Activated T-helper 2 cell treated with anti-CD3 and anti-CD28 coated beads, Interferon-gamma antibody, Interleukin-2, Interleukin-4, amounts not matched to agents 10 μg/mL and 5 μg/mL and 100 μg/mL, durations not matched to agents 14 hours and 24 hours and 36 hours (primary cell): ENCODE measurements at regions of chr20 and their contacts with region 1.

Region 1: DNA sequence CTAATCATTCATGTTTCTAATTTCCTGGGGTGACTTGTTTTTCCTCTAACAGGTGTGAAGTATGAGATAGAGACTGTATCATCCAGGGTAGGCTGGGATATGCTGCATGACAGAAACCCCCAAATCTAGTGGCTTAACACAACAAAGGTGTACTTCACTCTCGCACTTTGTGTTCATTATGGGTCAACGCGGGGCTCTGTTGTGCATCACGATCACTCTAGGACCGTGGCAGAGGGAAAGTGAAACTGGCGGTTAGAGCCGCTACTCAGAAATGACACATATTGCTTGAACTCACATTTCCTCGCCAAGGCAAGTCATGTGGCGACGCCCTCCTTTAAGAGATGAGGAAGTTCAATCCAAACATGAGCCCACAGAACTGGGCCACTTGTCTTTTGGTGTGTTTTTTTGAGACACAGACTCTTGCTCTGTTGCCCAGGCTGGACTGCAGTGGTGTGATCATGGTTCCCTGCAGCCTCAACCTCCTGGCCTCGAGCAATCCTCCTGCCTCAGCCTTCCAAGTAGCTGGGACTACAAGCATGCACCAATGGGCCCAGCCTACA is 41.3 kb downstream of the PCNA start:
- DNase-seq: peak; percentile 84
- H3K4me3 Mint-ChIP-seq: peak overlapping the region; percentile 69
- H3K27ac Mint-ChIP-seq: peak overlapping the region; percentile 96
- H3K4me1 Mint-ChIP-seq: peaks cover 48% of the 10 kb centered on the region
- H3K27me3 Mint-ChIP-seq: no peaks in the 10 kb centered on the region

Region 2: DNA sequence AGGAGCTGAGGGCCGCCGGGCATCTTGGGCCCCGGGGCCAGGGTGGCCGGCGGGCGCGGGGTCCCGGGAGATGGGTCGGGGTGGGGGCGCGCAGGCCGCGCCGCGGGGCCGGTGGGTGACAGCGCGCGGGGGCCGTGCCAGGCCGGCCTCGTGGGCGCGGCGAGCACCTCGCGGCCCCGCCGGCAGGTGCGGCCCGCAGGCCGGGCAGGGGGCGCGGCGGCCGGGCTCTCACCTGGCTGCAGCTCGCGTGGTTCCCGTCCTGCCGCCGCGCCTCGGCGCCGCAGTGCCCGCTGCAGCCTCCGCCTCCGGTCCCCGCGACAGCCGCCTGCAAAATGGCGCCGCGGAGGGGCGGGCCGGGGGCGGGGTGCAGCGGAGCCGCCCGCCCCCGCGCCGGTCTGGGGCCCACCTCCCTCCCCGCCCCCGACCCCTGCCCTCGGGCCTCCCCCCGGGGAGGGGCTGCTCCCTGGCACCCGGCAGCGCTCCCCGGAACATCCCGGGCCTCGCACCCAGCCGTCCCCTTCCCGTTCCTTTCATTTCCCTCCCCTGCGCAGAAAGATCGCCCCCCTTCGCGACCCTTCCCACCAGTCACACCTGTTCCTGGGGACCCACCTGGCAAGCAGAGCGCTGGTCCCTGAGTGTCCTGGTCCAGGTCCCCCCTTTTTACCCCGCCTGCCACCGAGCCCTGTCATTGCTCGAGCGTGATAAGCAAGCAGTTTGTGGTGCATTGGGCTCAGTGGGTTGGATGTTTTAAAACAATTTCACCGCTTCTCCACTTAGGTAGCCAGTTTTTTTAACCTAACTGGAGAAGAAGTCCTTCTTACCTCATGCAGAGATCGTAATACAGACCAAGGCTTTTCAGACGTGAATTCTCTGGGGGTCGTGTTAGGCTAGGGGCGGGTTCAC is 77.1 kb before region 1 on chr20 and contains the start of gene SLC23A2:
- intact Hi-C with region 1: loop called (anchors 5 kb)
- DNase-seq: peak; percentile 43
- H3K4me3 Mint-ChIP-seq: peak within 1 kb of the TSS; percentile 95
- H3K27ac Mint-ChIP-seq: peak within 1 kb of the TSS; percentile 95
- H3K4me1 Mint-ChIP-seq: peaks cover 28% of the 10 kb centered on the region
- H3K27me3 Mint-ChIP-seq: peaks cover 12% of the 10 kb centered on the region
- total RNA-seq, gene SLC23A2: 21.3 and 22.4 TPM in 2 replicates

Region 3: DNA sequence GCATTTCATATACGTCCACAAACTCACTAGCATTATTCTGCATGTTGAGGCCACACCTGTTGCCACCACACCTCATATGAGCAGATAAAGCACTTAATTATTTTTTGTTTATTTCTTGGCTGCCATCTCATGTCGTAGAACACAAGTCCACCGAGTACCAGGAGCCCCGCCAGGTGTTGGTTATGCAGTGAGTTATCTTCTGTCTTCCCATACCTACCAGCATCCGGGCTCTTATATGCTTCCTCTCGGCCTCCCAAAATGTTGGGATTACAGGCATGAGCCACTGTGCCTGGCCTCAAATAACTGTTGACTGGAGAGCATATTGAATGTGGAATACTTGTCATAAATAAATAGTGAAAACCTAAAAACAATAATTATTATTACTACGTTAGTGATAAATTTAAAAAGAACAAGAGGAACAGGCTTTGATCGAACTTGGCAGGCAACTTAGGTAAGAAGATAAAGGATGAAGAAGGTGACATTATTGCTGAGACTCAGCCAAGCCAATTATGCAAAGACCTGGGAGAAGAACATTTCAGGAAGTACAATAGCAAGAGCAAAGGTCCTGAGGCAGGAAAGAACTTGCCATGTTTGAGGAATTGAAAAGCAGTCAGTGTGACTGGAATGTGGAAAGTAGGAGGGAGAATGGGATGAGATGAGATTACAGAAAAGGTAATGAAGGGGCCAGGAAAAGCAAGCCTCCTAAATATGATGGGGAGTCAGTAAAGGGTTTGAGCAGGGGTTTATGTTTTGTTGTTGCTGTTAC is 64.6 kb before region 1 on chr20:
- intact Hi-C with region 1: no loop called
- DNase-seq: no peak
- H3K4me3 Mint-ChIP-seq: no peak overlapping the region
- H3K27ac Mint-ChIP-seq: no peak overlapping the region
- H3K4me1 Mint-ChIP-seq: peaks cover 11% of the 10 kb centered on the region
- H3K27me3 Mint-ChIP-seq: peaks cover 6% of the 10 kb centered on the region

Region 4: DNA sequence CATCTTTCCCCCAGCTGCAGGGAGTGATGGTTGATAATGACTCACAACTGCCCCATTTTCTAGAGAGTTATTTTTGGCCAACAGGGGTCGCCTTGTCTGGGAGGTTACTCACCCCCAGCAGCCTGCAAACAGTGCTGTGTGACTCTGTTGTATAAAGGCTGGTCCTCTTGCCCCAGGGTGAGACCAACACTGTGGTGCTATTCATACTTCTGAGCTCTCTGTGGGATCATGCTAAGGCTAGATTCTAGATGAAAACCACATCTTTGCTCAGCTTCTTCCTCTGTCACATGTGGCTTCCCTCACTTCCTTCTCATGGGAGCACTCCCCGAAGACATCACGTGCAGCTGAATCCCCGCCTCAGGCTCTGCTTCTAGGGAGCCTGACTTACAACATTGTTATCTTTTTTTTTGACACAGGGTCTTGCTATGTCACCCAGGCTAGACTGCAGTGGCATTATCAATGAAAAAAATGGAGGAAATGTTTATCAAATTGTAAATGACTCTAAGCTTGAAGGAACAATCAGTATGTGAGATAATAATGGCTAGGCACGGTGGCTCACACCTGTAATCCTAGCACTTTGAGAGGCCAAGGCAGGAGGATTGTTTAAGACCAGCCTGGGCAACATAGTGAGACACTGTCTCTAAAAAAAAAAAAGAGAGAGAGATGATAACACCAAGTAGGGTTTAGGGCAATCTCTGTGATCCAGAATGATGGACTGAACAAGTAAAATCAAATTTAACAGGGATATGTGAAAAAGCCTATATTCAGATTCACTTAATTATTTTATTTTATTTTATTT is 21.5 kb before region 1 on chr20:
- intact Hi-C with region 1: loop called (anchors 1 kb)
- DNase-seq: peak; percentile 69
- H3K4me3 Mint-ChIP-seq: no peak overlapping the region
- H3K27ac Mint-ChIP-seq: peak overlapping the region; percentile 87
- H3K4me1 Mint-ChIP-seq: peaks cover 21% of the 10 kb centered on the region
- H3K27me3 Mint-ChIP-seq: no peaks in the 10 kb centered on the region

Region 5: DNA sequence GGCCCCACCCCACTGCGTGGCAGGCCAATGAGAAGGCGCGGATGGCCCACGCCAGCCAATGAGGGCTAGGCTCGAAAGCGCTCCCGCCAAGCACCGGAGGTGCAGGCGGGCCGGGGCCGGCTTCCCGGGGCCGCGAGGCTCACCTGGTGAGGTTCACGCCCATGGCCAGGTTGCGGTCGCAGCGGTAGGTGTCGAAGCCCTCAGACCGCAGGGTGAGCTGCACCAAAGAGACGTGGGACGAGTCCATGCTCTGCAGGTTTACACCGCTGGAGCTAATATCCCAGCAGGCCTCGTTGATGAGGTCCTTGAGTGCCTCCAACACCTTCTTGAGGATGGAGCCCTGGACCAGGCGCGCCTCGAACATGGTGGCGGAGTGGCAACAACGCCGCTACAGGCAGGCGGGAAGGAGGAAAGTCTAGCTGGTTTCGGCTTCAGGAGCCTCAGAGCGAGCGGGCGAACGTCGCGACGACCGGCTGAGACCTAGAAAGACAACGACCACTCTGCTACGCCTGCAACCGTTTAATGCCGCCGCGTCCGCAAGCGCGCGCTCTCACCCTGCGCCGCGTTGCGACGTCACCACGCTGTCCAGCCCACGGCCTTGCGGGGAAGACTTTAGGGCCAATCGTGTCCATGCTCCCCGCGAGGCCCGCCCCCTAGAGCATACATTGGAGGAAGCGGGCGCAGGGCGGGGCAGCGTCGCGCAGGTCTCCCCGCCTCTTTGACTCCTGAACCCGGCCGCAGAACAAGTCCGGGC is 41.1 kb after region 1 on chr20 and contains the start of gene PCNA:
- intact Hi-C with region 1: loop called (anchors 2 kb)
- DNase-seq: peak; percentile 98
- H3K4me3 Mint-ChIP-seq: peak within 1 kb of the TSS; percentile 89
- H3K27ac Mint-ChIP-seq: peak within 1 kb of the TSS; percentile 94
- H3K4me1 Mint-ChIP-seq: peaks cover 50% of the 10 kb centered on the region
- H3K27me3 Mint-ChIP-seq: no peaks in the 10 kb centered on the region
- total RNA-seq, gene PCNA: 429 and 431 TPM in 2 replicates